ENCODE measurements at regions of chr4 and their contacts with region 1.

Region 1: DNA sequence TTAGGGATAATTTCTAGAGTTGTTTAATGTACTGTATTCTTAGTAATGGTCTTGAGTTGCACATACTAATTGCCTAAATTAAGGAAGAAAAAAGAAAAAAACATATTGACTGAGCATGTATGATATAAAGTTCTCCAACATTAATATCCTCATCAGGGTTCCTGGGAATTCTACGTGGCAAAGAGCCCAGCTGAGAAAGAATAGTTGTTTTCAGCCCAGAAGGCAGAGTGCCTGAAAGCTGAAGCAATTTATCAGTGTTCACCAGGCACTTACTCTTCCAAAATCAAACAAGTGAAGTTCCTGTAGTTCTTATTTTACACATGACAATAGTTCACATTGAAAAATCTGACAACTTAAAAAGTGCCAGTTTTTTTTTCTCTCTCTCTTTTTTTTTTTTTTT is 27.7 kb downstream of the YIPF7 start:
- DNase-seq: no peak
- H3K4me3 ChIP-seq: no peak overlapping the region
- H3K27ac ChIP-seq: no peak overlapping the region
- H3K4me1 ChIP-seq: no peaks in the 10 kb centered on the region
- H3K27me3 ChIP-seq: no peaks in the 10 kb centered on the region
- CTCF ChIP-seq: no peak
- POLR2A ChIP-seq: no peak

Region 2: GRCh38 chr4:44638091-44638490 is 14.4 kb after region 1 on chr4:
- intact Hi-C with region 1: loop called (anchors 2 kb)
- DNase-seq: no peak
- H3K4me3 ChIP-seq: no peak overlapping the region
- H3K27ac ChIP-seq: no peak overlapping the region
- H3K4me1 ChIP-seq: no peaks in the 10 kb centered on the region
- H3K27me3 ChIP-seq: no peaks in the 10 kb centered on the region
- CTCF ChIP-seq: no peak
- POLR2A ChIP-seq: no peak

Measured in breast epithelium (tissue), 4 donors.